ENCODE measurements at regions of chr3 and their contacts with region 1.

Region 1: GRCh38 chr3:88219138-88219792 is 69.5 kb downstream of the C3orf38 start:
- DNase-seq: peak in 1 of 2 donors; percentile 34
- ATAC-seq: peak in 4 of 8 donors; percentile 25 to 72 (median 47)
- H3K4me3 ChIP-seq: no peak overlapping the region
- H3K27ac ChIP-seq: no peak overlapping the region
- H3K4me1 ChIP-seq: no peaks in the 10 kb centered on the region
- H3K27me3 ChIP-seq: no peaks in the 10 kb centered on the region
- CTCF ChIP-seq: peak in 7 of 9 donors; percentile 41 to 70 (median 53)

Region 2: DNA sequence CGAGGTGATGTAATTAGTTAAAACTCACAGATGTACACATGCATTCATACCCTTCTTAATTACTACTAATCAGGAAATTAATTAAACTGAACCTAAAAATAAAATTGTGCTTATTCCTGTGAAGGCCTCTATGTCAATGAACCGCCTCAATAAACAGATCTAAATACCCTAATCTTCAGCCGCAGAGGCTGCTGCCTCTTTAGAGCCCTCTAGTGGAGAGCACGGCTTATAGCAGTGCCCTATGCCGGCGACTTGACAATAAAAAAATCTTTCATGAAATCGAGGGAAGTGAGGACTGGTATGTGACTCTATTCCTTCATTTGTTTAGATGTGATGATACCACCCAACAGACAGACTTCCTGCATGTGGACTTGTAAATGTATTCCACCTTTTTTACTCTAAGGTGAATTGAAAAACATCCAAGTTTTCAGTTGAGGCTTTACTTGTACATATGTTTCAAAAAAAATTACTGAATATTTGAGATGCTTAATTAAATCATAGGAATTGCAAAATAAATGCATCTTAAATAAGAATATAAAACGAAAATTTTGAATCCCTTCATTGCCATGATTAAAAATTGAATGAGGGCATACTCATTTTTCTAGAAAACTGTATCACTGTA is 879.8 kb after region 1 on chr3:
- intact Hi-C with region 1: loop called in 1 of 10 experiments (anchors 10 kb)
- DNase-seq: peak in 1 of 2 donors; percentile 16
- ATAC-seq: peak in 4 of 8 donors; percentile 49 to 58 (median 54)
- H3K4me3 ChIP-seq: no peak overlapping the region
- H3K27ac ChIP-seq: no peak overlapping the region
- H3K4me1 ChIP-seq: peaks cover 0 to 13% (median 0%) of the 10 kb centered on the region in 9 donors
- H3K27me3 ChIP-seq: no peaks in the 10 kb centered on the region
- CTCF ChIP-seq: peak; percentile 61 to 94 (median 86)

Measured in heart right ventricle (tissue), 16 donors.